ENCODE measurements at regions of chr12 and their contacts with region 1.

Region 1: DNA sequence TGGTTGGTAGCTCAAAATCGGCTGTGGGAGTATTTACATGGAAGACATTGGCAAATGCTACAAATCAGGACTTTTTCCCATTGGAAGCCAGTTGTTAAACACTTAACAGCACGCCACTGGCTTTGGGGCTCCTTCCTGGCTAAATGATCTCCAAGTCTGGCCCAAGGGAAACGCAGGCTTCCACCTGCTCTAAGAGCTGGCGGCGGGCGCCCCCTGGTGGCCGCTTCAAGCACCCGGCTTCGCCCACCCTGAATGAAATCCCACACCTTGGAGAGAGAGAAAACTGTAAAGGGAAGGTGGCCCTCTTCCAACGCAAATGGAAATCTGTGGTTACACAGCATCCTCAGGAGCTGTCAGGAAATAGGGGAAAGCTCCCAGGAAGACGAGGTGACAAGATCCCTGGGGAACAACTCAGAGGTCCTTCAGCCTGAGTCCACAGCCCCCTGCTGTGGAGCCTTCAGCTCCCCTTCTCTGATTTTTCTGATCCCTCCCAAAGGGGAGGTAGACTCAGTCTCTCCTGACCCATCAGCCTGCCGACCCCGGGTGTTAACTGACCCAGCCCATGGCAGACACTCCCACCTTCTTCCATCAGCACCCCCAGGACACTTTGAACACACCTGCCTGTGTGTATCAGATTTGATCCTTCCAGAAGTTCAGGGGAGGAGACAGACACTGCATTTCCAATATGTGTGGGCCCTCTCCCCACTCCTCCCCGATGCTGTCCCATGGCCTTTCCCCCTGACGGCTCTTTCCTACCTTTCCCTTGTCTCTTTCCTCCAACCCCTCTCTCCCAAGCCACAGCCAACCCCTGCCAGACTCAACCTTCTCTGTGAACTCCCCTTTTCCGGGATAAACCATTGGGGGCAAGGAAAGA is 15.4 kb downstream of the SELPLG start:
- DNase-seq: peak; percentile 82
- CTCF ChIP-seq: peak; percentile 93

Region 2: DNA sequence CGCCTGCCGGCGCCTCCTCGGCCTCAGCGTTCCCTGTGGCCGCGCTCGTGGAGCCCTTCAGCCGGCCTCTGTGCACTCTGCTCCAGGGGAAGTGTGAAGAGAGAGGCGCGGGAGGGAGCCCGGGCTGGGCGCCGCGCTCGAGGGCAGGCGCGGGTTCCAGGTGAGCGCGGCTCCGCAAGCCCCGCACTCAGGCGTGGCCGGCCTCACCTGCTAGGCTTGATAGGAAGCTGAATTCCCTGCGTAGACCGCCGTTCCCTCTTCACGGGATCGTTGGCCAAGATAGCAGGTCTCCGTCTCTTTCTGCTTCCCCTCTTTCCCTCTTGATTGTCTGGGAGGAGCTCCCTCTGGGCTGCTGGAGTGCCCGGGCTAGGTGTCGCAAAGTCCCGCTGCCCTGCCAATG is 754.1 kb before region 1 on chr12:
- CTCF ChIA-PET with region 1: no interaction called
- POLR2A ChIA-PET with region 1: no interaction called
- DNase-seq: no peak
- CTCF ChIP-seq: no peak

Region 3: DNA sequence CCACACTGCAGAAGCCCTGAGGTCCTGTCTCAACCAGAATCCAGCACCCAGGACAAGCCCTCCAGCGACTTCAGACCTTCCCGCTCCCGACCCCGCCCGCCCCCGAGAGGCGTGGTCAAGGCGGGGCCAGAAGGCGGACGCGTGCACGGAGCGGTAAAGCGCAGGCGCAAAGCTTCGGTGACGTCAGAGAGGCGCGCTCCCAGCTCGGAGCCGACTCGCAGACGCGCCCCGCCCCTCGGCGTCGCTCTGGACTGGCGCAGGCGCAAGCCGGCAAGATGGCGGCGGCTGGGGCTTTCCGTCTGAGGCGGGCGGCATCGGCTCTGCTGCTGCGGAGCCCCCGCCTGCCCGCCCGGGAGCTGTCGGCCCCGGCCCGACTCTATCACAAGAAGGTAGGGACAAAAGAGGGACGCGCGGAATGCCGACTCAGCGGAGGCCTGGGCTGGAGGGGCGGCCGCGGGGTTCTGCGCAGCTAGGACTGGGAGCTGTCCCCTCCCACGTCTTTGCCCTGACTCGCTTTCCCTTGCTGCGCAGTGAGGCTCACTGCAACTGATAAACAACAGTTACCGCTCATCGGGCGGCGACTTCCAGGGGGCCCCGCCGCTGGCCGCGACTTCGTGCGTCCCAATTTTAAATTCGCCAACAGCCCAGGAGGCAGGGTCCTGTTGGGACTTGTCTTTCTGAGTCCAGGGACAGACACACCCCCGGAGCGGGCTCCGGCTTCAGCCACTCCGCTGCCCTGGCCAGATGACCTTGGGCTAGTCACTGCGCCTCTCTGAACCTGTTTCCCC is 55.8 kb before region 1 on chr12 and contains the start of gene ISCU:
- CTCF ChIA-PET with region 1: interaction called, 543 read pairs
- POLR2A ChIA-PET with region 1: interaction called, 12 read pairs
- DNase-seq: peak; percentile 98
- CTCF ChIP-seq: no peak

Region 4: GRCh38 chr12:108570743-108571608 is 47.3 kb before region 1 on chr12:
- CTCF ChIA-PET with region 1: interaction called, 543 read pairs
- POLR2A ChIA-PET with region 1: interaction called, 16 read pairs
- DNase-seq: no peak
- CTCF ChIP-seq: peak; percentile 40

Region 5: GRCh38 chr12:108589028-108589839 is 29.1 kb before region 1 on chr12:
- CTCF ChIA-PET with region 1: interaction called, 14 read pairs
- POLR2A ChIA-PET with region 1: no interaction called
- DNase-seq: no peak
- CTCF ChIP-seq: no peak

Region 6: GRCh38 chr12:108633534-108634248 is 15.4 kb after region 1 on chr12 and contains the start of gene SELPLG:
- CTCF ChIA-PET with region 1: interaction called, 235 read pairs
- POLR2A ChIA-PET with region 1: interaction called, 4 read pairs
- DNase-seq: peak; percentile 87
- CTCF ChIP-seq: peak; percentile 20

Region 7: DNA sequence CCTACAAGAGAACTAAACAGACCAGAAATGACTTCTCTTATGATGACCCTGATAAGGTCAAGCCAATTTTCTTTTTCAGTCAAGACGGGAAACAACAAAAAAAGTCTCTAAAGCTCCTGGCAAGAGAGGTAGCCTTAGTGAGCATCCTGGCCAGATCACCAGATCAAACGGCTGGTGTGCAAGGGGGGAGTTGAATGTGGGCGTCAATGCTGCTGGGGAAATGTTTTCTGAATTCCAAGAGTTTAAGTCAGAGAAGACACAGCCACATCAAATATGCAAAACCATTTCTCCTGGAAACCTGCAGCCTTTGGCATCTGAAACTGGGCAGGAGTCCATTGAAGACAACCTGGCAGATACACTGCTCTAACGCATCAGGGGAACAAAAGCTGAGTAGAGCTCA is 31.4 kb after region 1 on chr12:
- CTCF ChIA-PET with region 1: interaction called, 15 read pairs
- POLR2A ChIA-PET with region 1: no interaction called
- DNase-seq: no peak
- CTCF ChIP-seq: no peak

Region 8: DNA sequence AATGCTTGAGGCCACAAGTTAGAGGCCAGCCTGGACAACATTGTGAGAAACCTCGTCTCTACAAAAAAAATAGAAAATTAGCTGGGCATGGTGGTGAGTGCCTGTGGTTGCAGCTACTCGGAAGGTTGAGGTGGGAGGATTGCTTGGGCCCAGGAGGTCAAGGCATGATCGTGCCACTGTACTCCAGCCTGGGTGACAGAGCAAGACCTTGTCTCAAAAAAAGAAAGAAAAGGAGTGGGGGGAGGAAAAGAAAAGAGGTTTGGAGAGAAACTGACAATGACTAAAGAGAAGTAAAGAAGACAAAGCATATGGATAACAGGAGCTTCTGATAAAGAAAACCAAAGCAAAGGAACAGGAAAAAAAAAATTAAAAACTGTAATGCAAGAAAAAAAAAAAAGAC is 52.8 kb after region 1 on chr12:
- CTCF ChIA-PET with region 1: no interaction called
- POLR2A ChIA-PET with region 1: no interaction called
- DNase-seq: no peak
- CTCF ChIP-seq: no peak

Measured in GM10248 (cell line).